Activated CD4-positive, alpha-beta memory T cell treated with anti-CD3 and anti-CD28 coated beads, Interleukin-2, amount 10 ng/mL, durations not matched to agents 7 days and 5 days (primary cell): ENCODE measurements at regions of chr5 and their contacts with region 1.

Region 1: GRCh38 chr5:77076961-77077823 is 9.9 kb downstream of the ZBED3 start:
- DNase-seq: peak; percentile 59
- H3K4me3 Mint-ChIP-seq: peak overlapping the region; percentile 44
- H3K27ac Mint-ChIP-seq: no peak overlapping the region
- H3K4me1 Mint-ChIP-seq: peaks cover 5% of the 10 kb centered on the region
- H3K27me3 Mint-ChIP-seq: no peaks in the 10 kb centered on the region

Region 2: GRCh38 chr5:76867827-76868693 is 209.1 kb before region 1 on chr5:
- CTCF ChIA-PET with region 1: interaction called, 38 read pairs
- POLR2A ChIA-PET with region 1: no interaction called
- DNase-seq: peak; percentile 73
- H3K4me3 Mint-ChIP-seq: no peak overlapping the region
- H3K27ac Mint-ChIP-seq: no peak overlapping the region
- H3K4me1 Mint-ChIP-seq: no peaks in the 10 kb centered on the region
- H3K27me3 Mint-ChIP-seq: no peaks in the 10 kb centered on the region

Region 3: GRCh38 chr5:77066823-77067442 is 10.3 kb before region 1 on chr5:
- CTCF ChIA-PET with region 1: interaction called, 14 read pairs
- POLR2A ChIA-PET with region 1: interaction called, 3 read pairs
- DNase-seq: no peak
- H3K4me3 Mint-ChIP-seq: no peak overlapping the region
- H3K27ac Mint-ChIP-seq: no peak overlapping the region
- H3K4me1 Mint-ChIP-seq: peaks cover 15% of the 10 kb centered on the region
- H3K27me3 Mint-ChIP-seq: no peaks in the 10 kb centered on the region

Region 4: DNA sequence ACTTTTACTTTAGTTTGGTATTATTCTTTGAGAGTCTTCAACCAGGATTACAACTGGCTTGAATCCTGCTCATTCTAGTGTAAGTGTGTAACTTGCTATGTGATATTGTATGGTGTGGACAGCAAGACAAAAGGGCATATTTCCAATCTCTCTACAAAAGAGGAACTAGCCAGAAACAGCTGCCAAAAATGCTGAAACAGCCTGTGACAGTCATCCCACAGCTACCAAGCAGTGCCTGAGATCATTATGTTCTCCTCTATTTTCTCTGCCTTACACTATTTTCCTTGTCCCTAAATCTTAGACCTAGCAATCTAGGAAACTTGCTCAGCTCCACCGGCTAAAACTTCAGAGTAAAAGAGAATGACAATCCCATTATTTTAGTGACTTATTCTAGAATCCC is 372.1 kb after region 1 on chr5:
- CTCF ChIA-PET with region 1: no interaction called
- POLR2A ChIA-PET with region 1: no interaction called
- DNase-seq: no peak
- H3K4me3 Mint-ChIP-seq: no peak overlapping the region
- H3K27ac Mint-ChIP-seq: no peak overlapping the region
- H3K4me1 Mint-ChIP-seq: no peaks in the 10 kb centered on the region
- H3K27me3 Mint-ChIP-seq: no peaks in the 10 kb centered on the region